CD8-positive, alpha-beta T cell (primary cell): ENCODE measurements at regions of chr14 and their contacts with region 1.

Region 1: DNA sequence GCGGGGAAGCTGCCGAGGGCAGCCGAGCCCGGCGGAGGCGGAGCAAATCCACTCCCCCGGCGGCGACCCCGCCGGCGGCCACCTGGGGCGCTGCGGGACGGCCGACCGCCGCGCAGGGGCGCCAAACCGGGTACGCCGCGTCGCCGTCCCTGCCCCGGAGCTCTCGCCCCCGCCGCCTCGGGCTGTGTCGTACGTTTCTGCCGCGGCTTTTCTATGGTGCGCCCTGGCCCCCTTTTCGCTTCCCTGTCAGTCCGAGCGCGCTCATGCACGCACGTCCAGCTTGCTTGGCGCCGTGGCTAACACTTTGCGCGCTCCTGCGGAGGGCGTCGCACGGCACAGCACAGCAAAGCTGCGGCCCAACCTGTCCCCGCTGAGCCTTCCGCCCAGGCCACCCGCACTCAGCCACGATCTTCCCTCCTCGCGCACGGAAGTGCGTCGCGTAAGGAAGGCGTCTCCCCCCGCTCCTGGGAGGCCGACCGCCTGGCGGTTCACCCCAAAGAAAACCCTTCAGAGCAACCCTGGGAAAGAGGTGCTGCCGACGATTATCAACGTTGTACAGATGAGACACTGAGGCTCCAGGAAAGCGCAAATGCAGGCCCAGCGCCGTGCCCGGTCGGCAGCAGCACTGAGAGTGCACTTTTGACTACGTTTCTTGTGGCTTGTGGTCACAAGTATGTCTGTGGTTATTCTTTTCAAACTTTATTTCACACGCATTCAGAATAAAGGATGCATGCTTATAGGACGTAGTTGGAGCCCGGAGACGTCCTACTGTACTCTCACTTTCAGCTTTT is at the start of gene HECTD1:
- DNase-seq: peak; percentile 78 to 97 (median 86)
- ATAC-seq: peak; percentile 67
- H3K4me3 ChIP-seq: peak within 1 kb of the TSS; percentile 74 to 77
- H3K4me3 Mint-ChIP-seq: peak within 1 kb of the TSS; percentile 96
- H3K27ac ChIP-seq: peak within 1 kb of the TSS; percentile 94 to 95
- H3K27ac Mint-ChIP-seq: peak within 1 kb of the TSS; percentile 100
- H3K4me1 ChIP-seq: peaks cover 36% of the 10 kb centered on the region
- H3K4me1 Mint-ChIP-seq: peaks cover 57% of the 10 kb centered on the region
- H3K27me3 ChIP-seq: no peaks in the 10 kb centered on the region
- H3K27me3 Mint-ChIP-seq: no peaks in the 10 kb centered on the region
- CTCF ChIP-seq: peak; percentile 81
- total RNA-seq, gene HECTD1: 148 to 152 TPM

Region 2: GRCh38 chr14:30826070-30826469 is 381.9 kb before region 1 on chr14:
- CTCF ChIA-PET with region 1: no interaction called
- POLR2A ChIA-PET with region 1: no interaction called
- intact Hi-C with region 1: no loop called
- DNase-seq: no peak
- ATAC-seq: no peak
- H3K4me3 ChIP-seq: no peak overlapping the region
- H3K4me3 Mint-ChIP-seq: no peak overlapping the region
- H3K27ac ChIP-seq: no peak overlapping the region
- H3K27ac Mint-ChIP-seq: no peak overlapping the region
- H3K4me1 ChIP-seq: no peaks in the 10 kb centered on the region
- H3K4me1 Mint-ChIP-seq: no peaks in the 10 kb centered on the region
- H3K27me3 ChIP-seq: no peaks in the 10 kb centered on the region
- H3K27me3 Mint-ChIP-seq: peaks cover 9% of the 10 kb centered on the region
- CTCF ChIP-seq: no peak

Region 3: DNA sequence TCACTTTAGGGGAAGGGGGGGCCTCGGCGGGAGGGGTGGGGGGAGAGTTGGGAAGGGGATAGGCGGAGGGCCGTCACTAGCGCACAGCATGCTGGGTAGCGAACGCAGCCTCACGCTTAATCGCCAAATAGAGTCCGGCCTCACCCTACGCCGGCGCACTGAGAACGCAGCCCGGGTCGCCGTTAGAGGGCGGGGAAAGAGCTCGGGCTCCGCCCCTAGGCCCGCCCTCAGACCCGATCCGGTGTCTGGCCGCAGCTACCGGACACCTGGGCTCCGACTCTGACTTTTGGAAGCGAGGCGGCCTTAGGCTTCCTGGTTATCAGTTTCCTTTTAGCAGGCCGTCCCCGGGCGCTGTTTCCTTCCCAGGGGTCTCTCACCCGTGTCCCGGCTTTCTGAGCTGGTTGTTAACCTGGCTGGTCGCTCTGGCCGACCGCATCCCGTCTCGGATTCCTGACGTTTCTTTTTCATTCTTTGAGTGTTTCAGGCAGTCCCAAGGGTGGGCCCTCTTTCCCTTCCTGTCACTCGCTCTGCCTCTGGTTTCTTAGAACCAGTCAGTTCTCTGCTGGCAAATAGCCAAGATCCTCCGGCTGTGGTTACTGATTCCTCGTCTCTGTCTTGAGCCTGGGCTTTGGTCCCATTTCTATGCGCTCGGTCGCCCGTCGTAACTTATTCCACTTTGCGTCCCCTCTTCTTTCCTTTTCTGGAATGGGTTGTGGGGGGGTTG is 181.4 kb before region 1 on chr14:
- CTCF ChIA-PET with region 1: no interaction called
- POLR2A ChIA-PET with region 1: interaction called, 28 read pairs
- intact Hi-C with region 1: loop called (anchors 1 to 2 kb)
- DNase-seq: peak; percentile 75 to 96 (median 88)
- ATAC-seq: peak; percentile 88
- H3K4me3 ChIP-seq: peak overlapping the region; percentile 77 to 99
- H3K4me3 Mint-ChIP-seq: peak overlapping the region; percentile 97
- H3K27ac ChIP-seq: peak overlapping the region; percentile 79 to 93
- H3K27ac Mint-ChIP-seq: peak overlapping the region; percentile 94
- H3K4me1 ChIP-seq: peaks cover 25% of the 10 kb centered on the region
- H3K4me1 Mint-ChIP-seq: peaks cover 47% of the 10 kb centered on the region
- H3K27me3 ChIP-seq: no peaks in the 10 kb centered on the region
- H3K27me3 Mint-ChIP-seq: no peaks in the 10 kb centered on the region
- CTCF ChIP-seq: no peak

Region 4: DNA sequence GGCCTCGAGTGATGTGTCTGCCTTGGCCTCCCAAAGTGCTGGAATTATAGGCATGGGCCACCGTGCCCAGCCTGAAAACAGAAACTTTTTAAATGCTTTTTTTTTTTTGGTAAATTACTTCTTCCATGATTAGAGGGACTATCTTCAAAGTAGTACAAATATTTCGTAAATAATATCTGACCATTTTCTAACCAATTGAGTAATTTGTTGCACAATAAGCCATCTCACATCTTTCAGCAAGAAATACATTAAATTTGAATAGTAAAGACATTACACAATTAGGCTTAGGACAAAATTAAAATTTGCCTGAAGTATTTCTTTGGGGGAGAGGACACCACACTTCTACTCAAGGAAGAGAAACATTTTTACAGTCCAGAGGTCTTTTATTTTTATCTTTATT is 97.1 kb before region 1 on chr14:
- CTCF ChIA-PET with region 1: no interaction called
- POLR2A ChIA-PET with region 1: no interaction called
- intact Hi-C with region 1: no loop called
- DNase-seq: no peak
- ATAC-seq: no peak
- H3K4me3 ChIP-seq: no peak overlapping the region
- H3K4me3 Mint-ChIP-seq: no peak overlapping the region
- H3K27ac ChIP-seq: no peak overlapping the region
- H3K27ac Mint-ChIP-seq: no peak overlapping the region
- H3K4me1 ChIP-seq: no peaks in the 10 kb centered on the region
- H3K4me1 Mint-ChIP-seq: no peaks in the 10 kb centered on the region
- H3K27me3 ChIP-seq: no peaks in the 10 kb centered on the region
- H3K27me3 Mint-ChIP-seq: no peaks in the 10 kb centered on the region
- CTCF ChIP-seq: no peak

Region 5: GRCh38 chr14:31172084-31172483 is 35.9 kb before region 1 on chr14:
- CTCF ChIA-PET with region 1: interaction called, 5 read pairs
- POLR2A ChIA-PET with region 1: interaction called, 5 read pairs
- intact Hi-C with region 1: loop called in 1 of 2 experiments (anchors 5 kb)
- DNase-seq: no peak
- ATAC-seq: no peak
- H3K4me3 ChIP-seq: no peak overlapping the region
- H3K4me3 Mint-ChIP-seq: no peak overlapping the region
- H3K27ac ChIP-seq: no peak overlapping the region
- H3K27ac Mint-ChIP-seq: no peak overlapping the region
- H3K4me1 ChIP-seq: no peaks in the 10 kb centered on the region
- H3K4me1 Mint-ChIP-seq: no peaks in the 10 kb centered on the region
- H3K27me3 ChIP-seq: no peaks in the 10 kb centered on the region
- H3K27me3 Mint-ChIP-seq: no peaks in the 10 kb centered on the region
- CTCF ChIP-seq: no peak

Region 6: GRCh38 chr14:31270196-31270772 is 62.3 kb after region 1 on chr14:
- CTCF ChIA-PET with region 1: interaction called, 5 read pairs
- POLR2A ChIA-PET with region 1: interaction called, 3 read pairs
- intact Hi-C with region 1: loop called in 1 of 2 experiments (anchors 5 kb)
- DNase-seq: peak in 2 of 9 experiments; percentile 9 to 21
- ATAC-seq: no peak
- H3K4me3 ChIP-seq: no peak overlapping the region
- H3K4me3 Mint-ChIP-seq: no peak overlapping the region
- H3K27ac ChIP-seq: no peak overlapping the region
- H3K27ac Mint-ChIP-seq: no peak overlapping the region
- H3K4me1 ChIP-seq: no peaks in the 10 kb centered on the region
- H3K4me1 Mint-ChIP-seq: peaks cover 2% of the 10 kb centered on the region
- H3K27me3 ChIP-seq: no peaks in the 10 kb centered on the region
- H3K27me3 Mint-ChIP-seq: no peaks in the 10 kb centered on the region
- CTCF ChIP-seq: no peak

Region 7: GRCh38 chr14:31360919-31361662 is 153.1 kb after region 1 on chr14:
- CTCF ChIA-PET with region 1: no interaction called
- POLR2A ChIA-PET with region 1: interaction called, 3 read pairs
- intact Hi-C with region 1: loop called (anchors 2 to 10 kb)
- DNase-seq: no peak
- ATAC-seq: no peak
- H3K4me3 ChIP-seq: no peak overlapping the region
- H3K4me3 Mint-ChIP-seq: no peak overlapping the region
- H3K27ac ChIP-seq: no peak overlapping the region
- H3K27ac Mint-ChIP-seq: no peak overlapping the region
- H3K4me1 ChIP-seq: no peaks in the 10 kb centered on the region
- H3K4me1 Mint-ChIP-seq: peaks cover under 1% of the 10 kb centered on the region
- H3K27me3 ChIP-seq: no peaks in the 10 kb centered on the region
- H3K27me3 Mint-ChIP-seq: no peaks in the 10 kb centered on the region
- CTCF ChIP-seq: no peak

Region 8: DNA sequence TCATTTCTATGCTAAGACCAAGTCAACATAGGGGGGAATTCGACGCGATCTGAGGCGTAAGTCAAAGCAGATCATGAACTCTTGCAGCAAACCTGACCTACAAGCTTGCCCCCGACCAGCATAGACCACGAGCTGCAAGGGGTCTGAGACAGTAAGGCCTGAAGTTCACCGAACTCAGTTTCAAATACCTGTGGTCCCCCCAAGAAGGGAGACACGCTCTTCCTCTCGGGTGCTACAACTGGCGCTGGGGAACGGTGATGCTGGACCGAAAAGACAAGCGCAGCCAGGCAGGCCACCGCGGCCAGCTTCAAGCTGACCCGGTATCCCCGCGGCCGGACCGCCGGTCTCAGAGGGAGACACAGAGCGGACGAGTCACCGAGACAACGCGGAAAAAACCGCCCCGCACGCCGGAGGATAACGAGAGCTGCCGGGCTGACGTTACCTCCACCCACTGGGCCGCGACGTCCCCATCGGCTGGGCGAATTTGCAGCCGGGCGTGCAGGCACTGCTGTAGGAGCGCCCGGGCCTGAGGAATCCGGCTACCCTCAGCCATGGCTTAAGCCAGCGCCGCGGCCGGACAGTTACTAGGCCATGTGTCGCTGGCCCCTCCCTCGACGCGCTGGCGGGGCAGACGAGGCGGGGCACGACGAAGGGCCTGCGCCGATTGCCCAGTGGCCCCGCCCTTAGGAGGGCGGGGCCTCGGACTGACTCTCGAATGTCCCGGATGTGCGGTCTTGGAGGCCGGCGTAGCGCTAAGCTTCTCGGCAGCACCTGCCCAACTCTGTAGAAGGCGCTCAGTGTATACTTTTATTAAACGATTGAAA is 249.1 kb after region 1 on chr14 and contains the start of gene DTD2:
- CTCF ChIA-PET with region 1: interaction called, 3 read pairs
- POLR2A ChIA-PET with region 1: interaction called, 14 read pairs
- intact Hi-C with region 1: loop called in 1 of 2 experiments (anchors 10 kb)
- DNase-seq: peak; percentile 87 to 95 (median 92)
- ATAC-seq: peak; percentile 98
- H3K4me3 ChIP-seq: peak within 1 kb of the TSS; percentile 93 to 95
- H3K4me3 Mint-ChIP-seq: peak within 1 kb of the TSS; percentile 96
- H3K27ac ChIP-seq: peak within 1 kb of the TSS; percentile 78 to 85
- H3K27ac Mint-ChIP-seq: peak within 1 kb of the TSS; percentile 92
- H3K4me1 ChIP-seq: peaks cover 15% of the 10 kb centered on the region
- H3K4me1 Mint-ChIP-seq: peaks cover 42% of the 10 kb centered on the region
- H3K27me3 ChIP-seq: no peaks in the 10 kb centered on the region
- H3K27me3 Mint-ChIP-seq: peaks cover 2% of the 10 kb centered on the region
- CTCF ChIP-seq: no peak
- total RNA-seq, gene DTD2: 4.9 to 6.5 TPM

Region 9: DNA sequence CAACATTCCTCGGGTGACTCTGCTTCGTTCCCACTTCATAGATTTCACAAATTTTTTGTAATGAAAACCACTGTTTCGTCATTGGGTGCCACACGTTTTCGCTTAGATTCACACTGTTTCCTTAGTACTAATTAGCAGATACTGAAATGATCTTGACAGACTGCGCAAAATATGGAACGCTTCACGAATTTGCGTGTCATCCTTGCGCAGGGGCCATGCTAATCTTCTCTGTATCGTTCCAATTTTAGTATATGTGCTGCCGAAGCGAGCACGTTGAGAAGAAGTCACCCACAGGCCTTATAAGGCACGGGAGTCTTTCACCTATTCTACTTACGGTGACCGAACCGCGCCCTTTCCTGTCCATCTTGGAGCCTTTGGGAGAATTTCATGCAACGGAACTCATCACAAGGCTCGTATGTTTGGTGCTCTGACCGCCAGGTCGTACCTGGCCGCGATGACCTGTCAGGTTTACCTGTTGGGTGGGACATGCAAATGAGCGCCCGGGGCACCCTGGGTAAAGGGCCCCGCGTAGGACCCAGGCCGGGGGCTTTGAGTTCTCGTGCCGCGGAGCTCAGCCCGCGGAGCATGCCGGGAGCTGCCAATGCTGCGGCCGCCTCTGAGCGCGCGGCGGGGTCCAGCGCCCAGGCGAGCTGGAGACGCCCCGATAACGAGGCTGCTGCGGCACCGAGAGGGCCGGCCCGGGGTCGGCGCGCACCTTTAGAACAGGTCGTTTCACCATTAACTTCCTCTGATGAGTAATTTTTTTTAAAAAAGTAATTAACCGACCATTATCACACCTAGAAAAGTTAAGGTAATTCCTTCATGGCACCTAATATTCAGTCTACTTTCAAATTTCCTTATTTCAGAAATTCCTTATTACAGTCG is 995.3 kb after region 1 on chr14 and contains the start of gene RNU6-8:
- CTCF ChIA-PET with region 1: no interaction called
- POLR2A ChIA-PET with region 1: no interaction called
- intact Hi-C with region 1: loop called in 1 of 2 experiments (anchors 2 kb)
- DNase-seq: peak; percentile 66 to 92 (median 85)
- ATAC-seq: peak; percentile 80
- H3K4me3 ChIP-seq: peak within 1 kb of the TSS; percentile 87 to 92
- H3K4me3 Mint-ChIP-seq: peak within 1 kb of the TSS; percentile 90
- H3K27ac ChIP-seq: peak within 1 kb of the TSS; percentile 99 to 100
- H3K27ac Mint-ChIP-seq: peak within 1 kb of the TSS; percentile 100
- H3K4me1 ChIP-seq: peaks cover 20% of the 10 kb centered on the region
- H3K4me1 Mint-ChIP-seq: peaks cover 29% of the 10 kb centered on the region
- H3K27me3 ChIP-seq: no peaks in the 10 kb centered on the region
- H3K27me3 Mint-ChIP-seq: peaks cover 2% of the 10 kb centered on the region
- CTCF ChIP-seq: no peak
- total RNA-seq, gene RNU6-8: not detected